ENCODE measurements at regions of chr3 and their contacts with region 1.

Region 1: DNA sequence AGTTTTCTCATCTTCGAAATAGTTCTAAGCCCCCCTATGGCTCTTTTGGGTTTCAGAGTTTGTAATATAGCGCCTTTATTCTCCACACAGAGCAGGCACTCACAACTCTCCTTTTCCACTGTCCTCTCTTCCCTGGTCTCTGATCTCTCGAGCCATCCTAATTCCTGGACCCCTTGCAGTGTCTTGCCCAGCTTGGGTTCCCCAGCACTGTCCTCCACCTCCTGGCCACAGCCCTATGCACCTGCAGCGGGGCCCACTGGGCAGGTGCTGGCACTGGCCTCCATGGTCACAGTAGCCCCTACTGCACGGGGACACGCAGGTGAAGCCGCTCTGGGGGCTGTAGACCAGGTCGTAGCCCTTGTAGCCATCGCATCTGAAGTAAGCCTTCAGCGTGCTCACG is 27.9 kb downstream of the MUC20 start:
- DNase-seq: no peak
- ATAC-seq: peak in 1 of 4 donors; percentile 16
- H3K4me3 ChIP-seq: no peak overlapping the region
- H3K27ac ChIP-seq: no peak overlapping the region
- H3K4me1 ChIP-seq: no peaks in the 10 kb centered on the region
- H3K27me3 ChIP-seq: no peaks in the 10 kb centered on the region
- CTCF ChIP-seq: no peak

Region 2: GRCh38 chr3:195616712-195617086 is 132.0 kb before region 1 on chr3:
- intact Hi-C with region 1: loop called in 1 of 2 experiments (anchors 10 kb)
- DNase-seq: no peak
- ATAC-seq: no peak
- H3K4me3 ChIP-seq: no peak overlapping the region
- H3K27ac ChIP-seq: no peak overlapping the region
- H3K4me1 ChIP-seq: no peaks in the 10 kb centered on the region
- H3K27me3 ChIP-seq: no peaks in the 10 kb centered on the region
- CTCF ChIP-seq: no peak

Region 3: GRCh38 chr3:195727606-195728195 is 21.0 kb before region 1 on chr3:
- intact Hi-C with region 1: loop called in 1 of 2 experiments (anchors 2 kb)
- DNase-seq: no peak
- ATAC-seq: no peak
- H3K4me3 ChIP-seq: no peak overlapping the region
- H3K27ac ChIP-seq: no peak overlapping the region
- H3K4me1 ChIP-seq: no peaks in the 10 kb centered on the region
- H3K27me3 ChIP-seq: no peaks in the 10 kb centered on the region
- CTCF ChIP-seq: no peak